ENCODE measurements at regions of chr6 and their contacts with region 1.

Region 1: GRCh38 chr6:134063966-134064445 is 11.6 kb upstream of the SLC2A12 start:
- H3K4me3 Mint-ChIP-seq: no peak overlapping the region
- H3K27ac Mint-ChIP-seq: no peak overlapping the region
- H3K4me1 Mint-ChIP-seq: no peaks in the 10 kb centered on the region
- H3K27me3 Mint-ChIP-seq: no peaks in the 10 kb centered on the region

Region 2: GRCh38 chr6:133804263-133804662 is 259.7 kb before region 1 on chr6:
- intact Hi-C with region 1: no loop called
- H3K4me3 Mint-ChIP-seq: no peak overlapping the region
- H3K27ac Mint-ChIP-seq: no peak overlapping the region
- H3K4me1 Mint-ChIP-seq: no peaks in the 10 kb centered on the region
- H3K27me3 Mint-ChIP-seq: no peaks in the 10 kb centered on the region

Region 3: GRCh38 chr6:133973109-133973971 is 90.7 kb before region 1 on chr6:
- intact Hi-C with region 1: loop called (anchors 1 kb)
- H3K4me3 Mint-ChIP-seq: no peak overlapping the region
- H3K27ac Mint-ChIP-seq: no peak overlapping the region
- H3K4me1 Mint-ChIP-seq: peaks cover 17% of the 10 kb centered on the region
- H3K27me3 Mint-ChIP-seq: no peaks in the 10 kb centered on the region

Region 4: DNA sequence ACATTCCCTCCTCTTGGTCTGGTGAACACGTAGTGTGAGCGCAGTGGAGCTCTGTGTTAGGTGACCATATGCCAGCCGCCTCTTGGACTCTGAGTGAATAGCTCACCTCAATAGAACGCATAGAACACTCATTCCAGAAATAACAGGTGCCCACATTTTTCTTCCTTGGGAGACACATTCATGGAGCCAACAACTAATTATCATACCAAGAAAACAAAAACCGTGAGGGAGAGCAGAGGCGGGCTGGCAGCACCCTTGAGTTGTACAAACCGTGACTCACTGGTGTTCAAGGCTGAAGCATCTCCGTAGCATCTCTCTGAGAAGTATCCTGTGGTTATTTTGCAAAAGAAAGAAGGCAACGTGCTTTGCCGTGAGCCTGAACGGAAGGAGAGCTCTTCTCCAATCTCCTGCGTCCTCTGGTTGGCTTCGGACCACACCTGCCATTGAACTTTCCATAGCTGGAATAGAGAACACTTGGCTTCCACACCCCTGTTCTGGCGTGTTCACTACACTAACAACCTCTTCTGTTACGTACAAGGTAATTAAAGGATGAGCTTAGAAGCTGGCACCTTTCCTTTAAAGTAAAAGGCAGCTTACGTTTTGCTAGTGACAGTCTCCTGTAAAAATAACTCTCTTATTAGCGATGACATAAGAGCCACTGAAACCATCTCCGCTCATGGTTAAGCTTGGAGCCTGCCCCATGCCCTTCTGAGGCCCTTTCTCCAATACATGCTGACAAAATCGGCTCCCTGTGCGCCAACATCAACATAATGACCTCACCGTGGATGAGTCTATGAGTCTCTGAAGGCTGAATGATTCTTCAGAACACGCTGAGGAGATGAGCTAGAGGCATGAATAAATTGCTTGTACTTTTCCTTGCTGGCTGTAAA is 284.2 kb after region 1 on chr6:
- intact Hi-C with region 1: no loop called
- H3K4me3 Mint-ChIP-seq: no peak overlapping the region
- H3K27ac Mint-ChIP-seq: peak overlapping the region; percentile 25
- H3K4me1 Mint-ChIP-seq: peaks cover 38% of the 10 kb centered on the region
- H3K27me3 Mint-ChIP-seq: no peaks in the 10 kb centered on the region

Measured in dendritic cell treated with granulocyte-macrophage colony-stimulating factor and Interleukin-4, amounts not matched to agents 40 ng/mL and 50 ng/mL, for 4 days (primary cell).